Heart left ventricle (tissue), 16 donors: ENCODE measurements at regions of chr4 and their contacts with region 1.

Region 1: DNA sequence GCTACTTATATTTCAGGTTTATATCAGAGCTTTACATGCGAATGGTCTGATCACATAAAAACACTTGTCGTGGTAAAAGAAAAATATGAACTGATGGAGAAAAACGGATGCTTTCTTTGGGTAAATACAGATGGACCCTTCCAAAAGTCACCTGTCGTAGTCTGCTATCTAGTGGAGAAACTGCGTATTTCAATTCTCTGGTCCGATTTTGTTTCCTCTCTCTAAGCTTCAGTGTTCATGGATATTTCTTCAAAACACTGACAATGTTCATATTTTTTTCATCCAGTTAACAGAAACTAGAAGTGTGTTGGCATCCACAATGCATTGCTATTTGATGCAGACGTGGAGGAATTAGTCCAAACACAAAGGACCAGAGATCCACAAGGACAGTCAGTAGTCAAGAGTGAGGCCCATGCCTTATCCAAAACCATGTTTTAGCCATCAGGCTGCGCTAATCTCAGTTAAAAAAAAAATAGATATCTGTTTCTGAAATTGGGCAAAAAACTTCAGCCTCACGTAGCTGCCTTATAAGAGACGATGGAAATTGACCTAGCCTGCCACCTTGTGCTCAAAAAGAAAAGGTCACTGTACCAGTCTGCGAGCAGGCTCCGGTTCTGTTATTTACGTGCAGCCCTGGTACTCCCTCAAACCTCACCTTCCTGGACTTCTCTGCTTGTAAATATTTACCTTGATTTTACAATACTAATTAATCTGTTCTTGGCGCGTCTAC is 16.0 kb downstream of the MEPE start:
- DNase-seq: peak in 4 of 5 donors; percentile 42 to 53 (median 48)
- ATAC-seq: peak; percentile 77 to 86 (median 80)
- H3K4me3 ChIP-seq: peak overlapping the region in 9 of 12 donors; percentile 24 to 41 (median 30)
- H3K27ac ChIP-seq: peak overlapping the region in 3 of 12 donors; percentile 6 to 42 (median 18)
- H3K4me1 ChIP-seq: peaks cover 0 to 42% (median 7%) of the 10 kb centered on the region in 12 donors
- H3K27me3 ChIP-seq: no peaks in the 10 kb centered on the region
- CTCF ChIP-seq: peak; percentile 54 to 74 (median 63)
- POLR2A ChIP-seq: no peak

Region 2: GRCh38 chr4:87353592-87353991 is 495.2 kb before region 1 on chr4:
- intact Hi-C with region 1: loop called in 2 of 10 experiments (anchors 10 kb)
- DNase-seq: peak in 3 of 5 donors; percentile 24 to 48 (median 31)
- ATAC-seq: peak in 3 of 4 donors; percentile 52 to 70 (median 65)
- H3K4me3 ChIP-seq: peak overlapping the region in 1 of 12 donors; percentile 7
- H3K27ac ChIP-seq: peak overlapping the region in 9 of 12 donors; percentile 5 to 76 (median 36)
- H3K4me1 ChIP-seq: peaks cover 0 to 21% (median 2%) of the 10 kb centered on the region in 12 donors
- H3K27me3 ChIP-seq: no peaks in the 10 kb centered on the region
- CTCF ChIP-seq: peak; percentile 36 to 77 (median 59)
- POLR2A ChIP-seq: no peak

Region 3: DNA sequence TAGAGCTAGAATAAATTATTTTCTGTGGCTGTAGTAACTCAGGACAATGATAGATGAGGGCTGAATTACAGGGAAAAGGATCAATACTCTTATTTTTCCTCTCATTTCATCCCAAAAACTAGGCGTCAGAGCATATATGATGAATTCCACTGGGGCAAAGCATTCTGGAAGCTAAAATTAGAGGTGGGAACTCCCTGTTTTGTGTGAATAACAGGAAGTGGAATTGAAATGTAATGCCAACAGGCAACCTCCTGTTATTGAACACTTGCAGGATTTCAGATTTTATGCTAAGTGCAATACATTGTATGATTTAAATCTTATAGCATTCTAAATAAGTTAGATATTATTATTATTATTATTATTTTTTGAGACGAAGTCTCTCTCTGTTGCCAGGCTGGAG is 478.7 kb before region 1 on chr4:
- intact Hi-C with region 1: loop called in 8 of 10 experiments (anchors 5 to 10 kb)
- DNase-seq: no peak
- ATAC-seq: no peak
- H3K4me3 ChIP-seq: no peak overlapping the region
- H3K27ac ChIP-seq: peak overlapping the region in 6 of 12 donors; percentile 7 to 59 (median 32)
- H3K4me1 ChIP-seq: peaks cover 0 to 12% (median 2%) of the 10 kb centered on the region in 12 donors
- H3K27me3 ChIP-seq: no peaks in the 10 kb centered on the region
- CTCF ChIP-seq: no peak
- POLR2A ChIP-seq: no peak

Region 4: DNA sequence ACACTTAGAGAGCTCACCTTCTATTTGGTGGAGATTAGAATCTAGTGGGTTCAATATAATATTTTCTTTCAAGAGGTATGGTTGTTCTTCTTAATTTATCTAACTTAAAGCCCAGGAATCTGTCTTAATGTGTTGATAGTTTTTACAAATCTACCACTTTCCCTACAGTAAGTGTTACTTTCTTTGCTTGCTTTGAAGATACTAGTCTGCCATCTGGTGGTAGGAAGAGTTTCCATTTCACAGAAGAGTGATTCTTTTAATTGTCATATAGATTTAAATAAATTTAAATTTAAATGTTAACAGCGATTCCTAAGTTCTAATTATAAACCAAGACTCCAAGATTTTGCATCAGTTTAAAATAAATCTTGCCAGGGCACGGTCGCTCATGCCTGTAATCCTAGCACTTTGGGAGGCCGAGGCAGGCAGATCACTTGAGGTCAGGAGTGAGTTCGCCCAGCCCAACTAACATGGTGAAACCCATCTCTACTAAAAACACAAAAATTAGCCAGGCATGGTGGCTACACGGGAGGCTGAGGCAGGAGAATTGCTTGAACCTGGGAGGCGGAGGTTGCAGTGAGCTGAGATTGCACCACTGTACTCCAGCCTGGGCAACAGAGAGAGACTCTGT is 382.9 kb before region 1 on chr4:
- intact Hi-C with region 1: loop called in 1 of 10 experiments (anchors 10 kb)
- DNase-seq: no peak
- ATAC-seq: peak in 1 of 4 donors; percentile 58
- H3K4me3 ChIP-seq: no peak overlapping the region
- H3K27ac ChIP-seq: no peak overlapping the region
- H3K4me1 ChIP-seq: peaks cover 0 to 4% (median 0%) of the 10 kb centered on the region in 12 donors
- H3K27me3 ChIP-seq: no peaks in the 10 kb centered on the region
- CTCF ChIP-seq: peak; percentile 43 to 81 (median 69)
- POLR2A ChIP-seq: no peak

Region 5: GRCh38 chr4:87679449-87680169 is 169.2 kb before region 1 on chr4:
- intact Hi-C with region 1: loop called in 4 of 10 experiments (anchors 1 to 2 kb)
- DNase-seq: peak in 4 of 5 donors; percentile 56 to 66 (median 60)
- ATAC-seq: peak; percentile 70 to 90 (median 80)
- H3K4me3 ChIP-seq: peak overlapping the region in 1 of 12 donors; percentile 9
- H3K27ac ChIP-seq: peak overlapping the region in 9 of 12 donors; percentile 18 to 63 (median 40)
- H3K4me1 ChIP-seq: peaks cover 0 to 21% (median 7%) of the 10 kb centered on the region in 12 donors
- H3K27me3 ChIP-seq: no peaks in the 10 kb centered on the region
- CTCF ChIP-seq: peak; percentile 71 to 91 (median 77)
- POLR2A ChIP-seq: no peak

Region 6: GRCh38 chr4:88211473-88212252 is 362.9 kb after region 1 on chr4:
- intact Hi-C with region 1: loop called in 8 of 10 experiments (anchors 1 to 5 kb)
- DNase-seq: peak in 2 of 5 donors; percentile 29 to 33
- ATAC-seq: peak in 3 of 4 donors; percentile 55 to 63 (median 62)
- H3K4me3 ChIP-seq: no peak overlapping the region
- H3K27ac ChIP-seq: no peak overlapping the region
- H3K4me1 ChIP-seq: peaks cover 0 to 3% (median 0%) of the 10 kb centered on the region in 12 donors
- H3K27me3 ChIP-seq: no peaks in the 10 kb centered on the region
- CTCF ChIP-seq: peak; percentile 62 to 86 (median 74)
- POLR2A ChIP-seq: no peak

Region 7: GRCh38 chr4:88523325-88524129 is 674.7 kb after region 1 on chr4 and contains the start of gene PYURF:
- intact Hi-C with region 1: loop called in 6 of 10 experiments (anchors 10 kb)
- DNase-seq: peak; percentile 94 to 98 (median 97)
- ATAC-seq: peak; percentile 96 to 98 (median 98)
- H3K4me3 ChIP-seq: peak within 1 kb of the TSS; percentile 66 to 96 (median 90)
- H3K27ac ChIP-seq: peak within 1 kb of the TSS; percentile 60 to 94 (median 86)
- H3K4me1 ChIP-seq: peaks cover 0 to 45% (median 19%) of the 10 kb centered on the region in 12 donors
- H3K27me3 ChIP-seq: no peaks in the 10 kb centered on the region
- CTCF ChIP-seq: peak in 1 of 12 donors; percentile 5
- POLR2A ChIP-seq: peak; percentile 4 to 87
- total RNA-seq, gene PYURF: 46.3 to 63.6 (median 54.2) TPM